ENCODE measurements at regions of chr19 and their contacts with region 1.

Region 1: GRCh38 chr19:16910750-16911445 is 22.1 kb downstream of the F2RL3 start:
- DNase-seq: no peak
- H3K4me3 ChIP-seq: no peak overlapping the region
- H3K27ac ChIP-seq: no peak overlapping the region
- H3K4me1 ChIP-seq: no peaks in the 10 kb centered on the region
- H3K27me3 ChIP-seq: no peaks in the 10 kb centered on the region
- CTCF ChIP-seq: peak in 1 of 3 experiments; percentile 5; a peak in 1 of 4 replicates
- EP300 ChIP-seq: no peak
- POLR2A ChIP-seq: no peak
- RAD21 ChIP-seq: peak in 1 of 2 experiments; percentile 8; a peak in 1 of 4 replicates

Region 2: GRCh38 chr19:16899566-16900075 is 11.3 kb before region 1 on chr19:
- CTCF ChIA-PET with region 1: interaction called, 11 read pairs
- POLR2A ChIA-PET with region 1: no interaction called
- DNase-seq: peak in 1 of 2 experiments; percentile 72
- H3K4me3 ChIP-seq: no peak overlapping the region
- H3K27ac ChIP-seq: no peak overlapping the region
- H3K4me1 ChIP-seq: peaks cover 0 to 3% (median 1%) of the 10 kb centered on the region in 4 experiments; a peak in 3 of 7 replicates
- H3K27me3 ChIP-seq: peaks cover 0 to 16% (median 8%) of the 10 kb centered on the region in 4 experiments; a peak in 5 of 7 replicates
- CTCF ChIP-seq: peak; percentile 66 to 70 (median 67)
- EP300 ChIP-seq: no peak
- POLR2A ChIP-seq: no peak
- RAD21 ChIP-seq: peak; percentile 67 to 76

Measured in H1 (cell line).